ENCODE measurements at regions of chr3 and their contacts with region 1.

Region 1: GRCh38 chr3:131794766-131795388 is 239.9 kb downstream of the CPNE4 start:
- DNase-seq: peak; percentile 77
- H3K4me3 Mint-ChIP-seq: no peak overlapping the region
- H3K27ac Mint-ChIP-seq: no peak overlapping the region
- H3K4me1 Mint-ChIP-seq: peaks cover 22% of the 10 kb centered on the region
- H3K27me3 Mint-ChIP-seq: no peaks in the 10 kb centered on the region
- CTCF ChIP-seq: peak; percentile 96

Region 2: DNA sequence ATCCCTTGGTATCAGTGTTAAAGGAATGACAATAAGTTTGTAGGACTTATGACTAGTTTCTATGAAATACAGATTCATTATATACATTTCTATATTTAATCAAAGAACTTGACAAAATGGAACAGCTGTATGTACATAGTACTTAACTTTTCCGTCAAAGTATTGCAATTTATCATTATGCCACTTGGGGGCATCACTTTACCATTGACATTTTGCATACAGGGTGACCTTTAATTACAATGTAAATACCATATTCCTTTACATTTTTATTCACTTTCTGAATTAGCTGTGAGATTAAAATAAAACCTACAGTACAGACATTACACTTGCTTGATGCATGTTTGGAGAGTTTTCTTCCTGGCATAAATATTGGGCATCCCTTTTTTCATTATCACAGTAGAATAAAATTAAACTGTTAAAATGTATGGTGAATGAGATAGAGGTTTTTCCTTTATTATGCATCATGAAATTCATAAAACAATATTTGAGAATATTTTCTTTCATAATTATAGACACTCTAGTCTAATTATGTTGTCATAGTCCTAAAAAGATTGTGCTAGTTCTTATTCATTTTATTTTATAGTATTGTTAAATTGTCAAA is 761.3 kb before region 1 on chr3:
- CTCF ChIA-PET with region 1: no interaction called
- intact Hi-C with region 1: loop called (anchors 2 kb)
- DNase-seq: peak; percentile 65
- H3K4me3 Mint-ChIP-seq: no peak overlapping the region
- H3K27ac Mint-ChIP-seq: no peak overlapping the region
- H3K4me1 Mint-ChIP-seq: no peaks in the 10 kb centered on the region
- H3K27me3 Mint-ChIP-seq: no peaks in the 10 kb centered on the region
- CTCF ChIP-seq: peak; percentile 67

Region 3: DNA sequence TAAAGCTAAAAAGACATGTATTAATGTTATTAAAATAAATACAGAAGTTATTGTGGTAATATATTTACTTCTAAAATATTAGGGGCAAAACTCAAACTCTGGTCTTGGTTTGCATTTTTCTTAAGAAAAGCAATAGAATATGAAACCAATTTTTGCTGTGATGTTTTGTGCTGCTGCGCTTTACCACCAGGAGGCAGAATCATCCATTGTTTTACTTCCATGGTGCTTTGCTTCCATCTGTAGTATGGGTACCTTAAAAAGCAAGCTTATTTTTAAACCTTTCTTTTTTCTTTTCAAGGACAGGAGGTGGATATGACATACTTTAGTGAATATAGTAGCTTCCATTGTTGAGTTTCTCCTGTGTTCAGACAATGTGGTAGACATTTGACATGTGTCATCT is 245.5 kb before region 1 on chr3:
- CTCF ChIA-PET with region 1: no interaction called
- intact Hi-C with region 1: loop called (anchors 2 kb)
- DNase-seq: peak; percentile 44
- H3K4me3 Mint-ChIP-seq: no peak overlapping the region
- H3K27ac Mint-ChIP-seq: no peak overlapping the region
- H3K4me1 Mint-ChIP-seq: peaks cover 4% of the 10 kb centered on the region
- H3K27me3 Mint-ChIP-seq: no peaks in the 10 kb centered on the region
- CTCF ChIP-seq: peak; percentile 67

Region 4: GRCh38 chr3:132006605-132007204 is 211.8 kb after region 1 on chr3:
- CTCF ChIA-PET with region 1: interaction called, 4 read pairs
- intact Hi-C with region 1: loop called (anchors 5 kb)
- DNase-seq: peak; percentile 78
- H3K4me3 Mint-ChIP-seq: no peak overlapping the region
- H3K27ac Mint-ChIP-seq: no peak overlapping the region
- H3K4me1 Mint-ChIP-seq: peaks cover 33% of the 10 kb centered on the region
- H3K27me3 Mint-ChIP-seq: no peaks in the 10 kb centered on the region
- CTCF ChIP-seq: peak; percentile 86

Region 5: GRCh38 chr3:132210476-132211346 is 415.8 kb after region 1 on chr3:
- CTCF ChIA-PET with region 1: interaction called, 19 read pairs
- intact Hi-C with region 1: loop called (anchors 1 kb)
- DNase-seq: peak; percentile 84
- H3K4me3 Mint-ChIP-seq: no peak overlapping the region
- H3K27ac Mint-ChIP-seq: no peak overlapping the region
- H3K4me1 Mint-ChIP-seq: peaks cover 12% of the 10 kb centered on the region
- H3K27me3 Mint-ChIP-seq: no peaks in the 10 kb centered on the region
- CTCF ChIP-seq: peak; percentile 98

Region 6: DNA sequence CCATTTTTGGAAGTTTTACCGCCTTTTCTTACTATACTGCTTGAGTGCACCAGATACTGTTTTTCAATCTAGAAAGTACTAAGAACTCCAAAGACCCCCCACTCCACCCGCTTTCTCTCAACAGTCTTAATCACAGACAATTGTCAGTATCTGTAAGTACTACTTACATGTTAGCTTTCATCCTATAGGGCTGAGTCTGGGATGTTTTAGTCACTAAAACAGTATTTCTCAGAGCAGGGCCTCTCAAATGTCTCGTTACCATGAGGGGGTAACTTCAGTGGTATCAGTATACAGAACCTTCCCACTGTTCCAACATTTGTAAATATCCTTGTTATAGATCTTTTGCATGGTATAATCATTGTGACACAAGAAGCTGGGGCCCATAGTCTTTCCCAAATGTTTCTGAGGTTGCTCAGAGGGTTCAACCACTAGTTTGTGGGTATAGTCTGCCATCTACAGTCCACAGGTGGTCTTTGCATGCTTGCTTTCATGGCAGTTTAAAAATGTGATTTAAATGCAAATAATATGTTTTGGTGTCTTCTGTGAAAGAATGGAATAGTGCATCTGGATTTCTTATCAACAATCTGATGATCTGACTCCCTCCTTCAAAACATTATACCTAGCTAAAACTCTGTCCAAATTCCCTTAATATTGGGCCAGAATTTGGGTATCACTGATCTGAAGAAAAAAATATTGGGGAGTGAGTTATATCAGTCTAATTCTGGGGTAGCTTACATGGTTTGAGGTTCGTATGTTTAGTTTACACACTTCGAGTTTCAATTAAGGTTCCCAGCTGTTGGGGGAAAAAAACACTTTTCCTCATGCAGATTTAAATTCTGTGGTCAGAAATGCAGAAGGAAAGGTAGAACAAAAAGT is 604.4 kb after region 1 on chr3:
- CTCF ChIA-PET with region 1: interaction called, 3 read pairs
- intact Hi-C with region 1: loop called (anchors 10 kb)
- DNase-seq: peak; percentile 63
- H3K4me3 Mint-ChIP-seq: no peak overlapping the region
- H3K27ac Mint-ChIP-seq: no peak overlapping the region
- H3K4me1 Mint-ChIP-seq: no peaks in the 10 kb centered on the region
- H3K27me3 Mint-ChIP-seq: no peaks in the 10 kb centered on the region
- CTCF ChIP-seq: peak; percentile 87